ENCODE measurements at regions of chr3 and their contacts with region 1.

Region 1: DNA sequence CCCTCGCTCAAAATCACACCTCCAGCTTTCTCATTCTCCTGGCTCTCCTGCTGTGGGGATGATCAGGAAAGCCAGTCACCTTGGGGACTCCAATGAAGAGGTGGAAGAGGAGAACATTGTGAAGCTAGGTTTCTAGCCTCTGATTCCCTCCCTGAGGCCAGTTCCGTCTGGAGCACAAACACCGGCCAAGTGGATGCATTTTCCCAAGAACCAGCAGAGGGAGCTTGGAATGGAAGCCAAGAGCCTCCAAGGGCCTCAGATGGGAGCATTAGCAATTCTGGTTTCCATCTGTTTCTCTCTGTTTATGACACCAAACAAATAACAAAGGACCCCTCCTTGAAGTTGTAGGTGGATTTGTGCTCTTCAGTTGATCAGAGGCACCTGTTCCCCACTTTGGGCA is 40.6 kb upstream of the NMNAT3 start:
- DNase-seq: peak; percentile 21 to 68
- H3K4me3 ChIP-seq: no peak overlapping the region
- H3K27ac ChIP-seq: no peak overlapping the region
- H3K4me1 ChIP-seq: peaks cover 0 to 13% (median 5%) of the 10 kb centered on the region in 4 experiments; a peak in 4 of 7 replicates
- H3K27me3 ChIP-seq: no peaks in the 10 kb centered on the region
- CTCF ChIP-seq: peak; percentile 59 to 80 (median 72)
- EP300 ChIP-seq: no peak
- POLR2A ChIP-seq: no peak
- RAD21 ChIP-seq: peak; percentile 60 to 77

Region 2: DNA sequence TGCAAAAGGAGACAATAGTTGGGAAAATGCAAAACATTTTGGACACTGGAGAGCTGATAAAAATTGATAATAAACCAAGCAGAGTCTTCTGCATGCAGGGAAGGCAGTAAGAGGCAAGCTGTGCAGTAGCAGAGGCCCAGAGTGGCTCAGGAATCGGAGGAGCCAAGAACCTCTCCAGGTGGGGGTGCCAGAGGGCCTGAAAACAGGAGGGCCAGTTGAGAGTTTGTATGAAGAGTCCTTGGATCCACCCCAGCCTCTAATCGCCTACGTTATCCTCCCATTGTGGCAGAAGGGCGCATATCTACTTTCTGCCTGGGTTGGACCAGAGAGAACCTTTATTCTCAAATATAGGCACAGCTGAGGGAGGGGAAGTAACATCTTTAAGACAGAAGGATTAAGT is 130.0 kb before region 1 on chr3:
- CTCF ChIA-PET with region 1: interaction called, 15 read pairs
- POLR2A ChIA-PET with region 1: no interaction called
- DNase-seq: peak in 1 of 2 experiments; percentile 83
- H3K4me3 ChIP-seq: no peak overlapping the region
- H3K27ac ChIP-seq: no peak overlapping the region
- H3K4me1 ChIP-seq: no peaks in the 10 kb centered on the region
- H3K27me3 ChIP-seq: no peaks in the 10 kb centered on the region
- CTCF ChIP-seq: peak; percentile 67 to 81 (median 74)
- EP300 ChIP-seq: no peak
- POLR2A ChIP-seq: no peak
- RAD21 ChIP-seq: peak; percentile 84 to 90

Region 3: DNA sequence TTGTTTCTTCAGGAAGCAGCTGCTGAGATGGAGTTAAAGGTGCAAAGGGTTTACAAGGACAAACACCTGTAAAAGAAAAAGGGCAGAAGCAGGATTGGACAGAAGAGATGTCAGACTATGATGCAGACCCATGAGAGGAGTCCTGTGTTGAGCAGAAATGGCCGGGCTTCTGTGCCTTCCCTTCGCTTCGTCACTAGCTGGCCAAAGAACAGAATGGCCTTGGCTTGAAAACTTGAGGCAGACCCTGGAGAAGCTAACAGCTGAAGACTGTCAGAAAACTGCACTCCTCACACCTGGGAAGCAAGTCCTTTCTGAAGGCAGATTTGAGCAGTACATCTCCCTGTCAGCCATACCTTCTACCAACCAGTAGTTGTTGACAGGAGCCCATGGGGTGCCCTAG is 32.2 kb before region 1 on chr3:
- CTCF ChIA-PET with region 1: interaction called, 11 read pairs
- POLR2A ChIA-PET with region 1: no interaction called
- DNase-seq: no peak
- H3K4me3 ChIP-seq: no peak overlapping the region
- H3K27ac ChIP-seq: no peak overlapping the region
- H3K4me1 ChIP-seq: peaks cover 0 to 3% (median 0%) of the 10 kb centered on the region in 4 experiments; a peak in 1 of 7 replicates
- H3K27me3 ChIP-seq: no peaks in the 10 kb centered on the region; a peak in 1 of 7 replicates
- CTCF ChIP-seq: no peak
- EP300 ChIP-seq: no peak
- POLR2A ChIP-seq: no peak
- RAD21 ChIP-seq: no peak

Region 4: DNA sequence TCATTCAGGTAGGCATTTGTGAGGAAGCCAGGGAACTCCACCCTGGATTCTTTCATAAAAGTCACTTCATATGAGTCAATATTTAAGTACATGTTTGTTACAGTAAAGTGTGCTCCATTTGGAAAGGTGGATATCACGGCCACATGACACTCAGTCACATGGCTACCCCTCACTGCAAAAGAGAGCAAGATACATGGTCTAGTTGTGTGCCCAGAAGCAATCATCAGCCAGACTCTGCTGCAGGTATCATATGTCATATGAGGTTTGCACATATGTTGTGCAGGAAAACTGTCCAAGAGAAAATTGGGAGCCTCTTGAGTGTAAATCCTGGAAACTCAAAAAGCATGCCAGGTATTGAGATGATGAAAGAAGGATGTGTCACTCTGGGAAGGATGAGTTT is 14.3 kb after region 1 on chr3:
- CTCF ChIA-PET with region 1: interaction called, 27 read pairs
- POLR2A ChIA-PET with region 1: no interaction called
- DNase-seq: no peak
- H3K4me3 ChIP-seq: no peak overlapping the region
- H3K27ac ChIP-seq: no peak overlapping the region
- H3K4me1 ChIP-seq: no peaks in the 10 kb centered on the region
- H3K27me3 ChIP-seq: no peaks in the 10 kb centered on the region
- CTCF ChIP-seq: no peak
- EP300 ChIP-seq: no peak
- POLR2A ChIP-seq: no peak
- RAD21 ChIP-seq: no peak

Region 5: DNA sequence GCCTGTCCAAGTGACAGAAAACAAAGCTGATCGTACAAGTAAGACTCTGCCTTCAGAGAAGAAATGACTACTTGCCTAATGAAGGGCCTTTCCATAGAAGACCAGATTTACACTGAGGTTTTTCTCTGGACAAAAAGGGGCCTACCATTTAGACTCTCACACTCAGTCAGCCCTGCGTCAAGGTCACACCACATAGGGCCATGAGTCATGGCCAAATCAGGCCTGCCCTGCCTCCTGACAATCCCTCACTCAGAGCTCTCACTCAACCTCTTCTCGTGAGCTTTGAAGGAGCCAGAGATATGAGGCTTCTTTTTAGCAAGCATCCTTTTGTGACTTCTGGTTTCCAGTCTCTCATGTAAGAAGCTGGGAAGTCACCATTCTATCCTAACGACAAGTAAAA is 27.4 kb after region 1 on chr3:
- CTCF ChIA-PET with region 1: interaction called, 10 read pairs
- POLR2A ChIA-PET with region 1: no interaction called
- DNase-seq: no peak
- H3K4me3 ChIP-seq: no peak overlapping the region
- H3K27ac ChIP-seq: no peak overlapping the region
- H3K4me1 ChIP-seq: no peaks in the 10 kb centered on the region
- H3K27me3 ChIP-seq: no peaks in the 10 kb centered on the region; a peak in 1 of 7 replicates
- CTCF ChIP-seq: no peak
- EP300 ChIP-seq: no peak
- POLR2A ChIP-seq: no peak
- RAD21 ChIP-seq: no peak

Region 6: GRCh38 chr3:139935016-139935865 is 216.8 kb after region 1 on chr3 and contains the start of gene CLSTN2:
- CTCF ChIA-PET with region 1: interaction called, 54 read pairs
- POLR2A ChIA-PET with region 1: no interaction called
- DNase-seq: no peak
- H3K4me3 ChIP-seq: peak within 1 kb of the TSS; percentile 49 to 83 (median 56)
- H3K27ac ChIP-seq: no peak within 1 kb of the TSS
- H3K4me1 ChIP-seq: peaks cover 3 to 7% (median 5%) of the 10 kb centered on the region in 4 experiments; a peak in 5 of 7 replicates
- H3K27me3 ChIP-seq: peaks cover 14 to 30% (median 24%) of the 10 kb centered on the region in 4 experiments
- CTCF ChIP-seq: 0 out of 4 replicates have a peak, but pooled peaks of 1 of the 3 experiments have one; percentile 0
- EP300 ChIP-seq: no peak
- POLR2A ChIP-seq: no peak
- RAD21 ChIP-seq: no peak; a peak in 1 of 4 replicates
- total RNA-seq, gene CLSTN2: 0.31 and 0.52 TPM in 2 replicates